ENCODE measurements at regions of chr13 and their contacts with region 1.

Region 1: GRCh38 chr13:105232439-105232838 is 1303.0 kb downstream of the EFNB2 start:
- DNase-seq: no peak
- ATAC-seq: no peak
- H3K4me3 ChIP-seq: no peak overlapping the region
- H3K27ac ChIP-seq: no peak overlapping the region
- H3K4me1 ChIP-seq: no peaks in the 10 kb centered on the region
- H3K27me3 ChIP-seq: no peaks in the 10 kb centered on the region
- CTCF ChIP-seq: no peak
- EP300 ChIP-seq: no peak
- POLR2A ChIP-seq: no peak
- RAD21 ChIP-seq: no peak

Region 2: GRCh38 chr13:105272660-105273631 is 40.5 kb after region 1 on chr13:
- CTCF ChIA-PET with region 1: no interaction called
- POLR2A ChIA-PET with region 1: no interaction called
- in situ Hi-C with region 1: no loop called
- intact Hi-C with region 1: loop called (anchors 1 kb)
- DNase-seq: no peak
- ATAC-seq: no peak
- H3K4me3 ChIP-seq: no peak overlapping the region
- H3K27ac ChIP-seq: no peak overlapping the region
- H3K4me1 ChIP-seq: no peaks in the 10 kb centered on the region
- H3K27me3 ChIP-seq: no peaks in the 10 kb centered on the region
- CTCF ChIP-seq: no peak
- EP300 ChIP-seq: no peak
- POLR2A ChIP-seq: no peak
- RAD21 ChIP-seq: no peak

Measured in HepG2 (cell line).